Colonic mucosa (tissue), 4 donors: ENCODE measurements at regions of chr5 and their contacts with region 1.

Region 1: DNA sequence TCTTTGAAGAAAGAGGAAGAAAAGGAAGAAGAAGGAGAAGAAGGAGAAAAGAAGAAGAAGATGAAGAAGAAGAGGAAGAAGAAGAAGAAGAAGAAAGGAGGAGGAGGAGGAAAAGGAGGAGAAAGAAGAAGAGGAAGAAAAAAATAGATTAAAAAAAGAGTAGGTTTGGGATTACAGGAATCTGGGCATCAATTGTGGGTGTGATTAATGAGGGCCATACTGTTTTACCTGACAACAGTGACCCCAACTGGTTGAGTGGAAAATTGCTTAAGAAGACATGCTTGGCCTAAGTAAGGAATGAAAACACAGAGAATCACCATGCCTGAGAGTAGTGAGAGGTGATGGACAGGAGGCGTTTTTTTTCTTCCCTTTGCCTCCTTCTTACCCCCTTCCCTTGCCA is 114.6 kb downstream of the FAM170A start:
- DNase-seq: peak; percentile 30
- H3K4me3 ChIP-seq: no peak overlapping the region
- H3K27ac ChIP-seq: no peak overlapping the region
- H3K4me1 ChIP-seq: no peaks in the 10 kb centered on the region
- H3K27me3 ChIP-seq: no peaks in the 10 kb centered on the region
- CTCF ChIP-seq: peak; percentile 38

Region 2: DNA sequence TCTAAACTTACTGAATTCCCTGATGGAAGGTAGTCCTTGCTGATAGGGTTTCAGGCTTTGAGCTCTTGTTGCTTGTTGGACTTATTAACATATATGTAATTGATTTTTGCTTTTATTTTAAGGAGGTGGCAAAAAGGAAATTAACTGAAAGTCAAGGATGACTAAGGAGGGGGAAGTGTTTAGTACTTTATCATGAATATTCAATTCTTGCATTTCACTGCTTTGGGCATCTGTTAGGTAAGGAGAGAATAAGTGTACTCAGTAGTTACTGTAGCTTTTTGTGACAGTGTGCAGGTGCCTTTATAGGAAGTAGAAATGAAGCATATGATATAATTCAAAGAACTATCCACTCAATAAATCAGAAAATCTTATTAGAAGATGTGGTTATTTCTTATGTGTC is 625.9 kb before region 1 on chr5:
- intact Hi-C with region 1: no loop called
- DNase-seq: no peak
- H3K4me3 ChIP-seq: no peak overlapping the region
- H3K27ac ChIP-seq: no peak overlapping the region
- H3K4me1 ChIP-seq: no peaks in the 10 kb centered on the region
- H3K27me3 ChIP-seq: no peaks in the 10 kb centered on the region
- CTCF ChIP-seq: no peak

Region 3: GRCh38 chr5:119470851-119471451 is 273.0 kb before region 1 on chr5:
- intact Hi-C with region 1: loop called (anchors 10 kb)
- DNase-seq: no peak
- H3K4me3 ChIP-seq: no peak overlapping the region
- H3K27ac ChIP-seq: no peak overlapping the region
- H3K4me1 ChIP-seq: no peaks in the 10 kb centered on the region
- H3K27me3 ChIP-seq: no peaks in the 10 kb centered on the region
- CTCF ChIP-seq: peak; percentile 44

Region 4: GRCh38 chr5:119578937-119579336 is 165.0 kb before region 1 on chr5:
- intact Hi-C with region 1: loop called (anchors 10 kb)
- DNase-seq: no peak
- H3K4me3 ChIP-seq: no peak overlapping the region
- H3K27ac ChIP-seq: no peak overlapping the region
- H3K4me1 ChIP-seq: no peaks in the 10 kb centered on the region
- H3K27me3 ChIP-seq: no peaks in the 10 kb centered on the region
- CTCF ChIP-seq: no peak